Activated T-helper 1 cell treated with anti-CD3 and anti-CD28 coated beads, Interleukin-12 subunit alpha, Interleukin-12 subunit beta, Interleukin-2, Interleukin-4 antibody, amounts not matched to agents 30 ng/mL and 10 ng/mL and 1 ng/mL, durations not matched to agents 14 hours and 24 hours and 36 hours (primary cell): ENCODE measurements at regions of chr1 and their contacts with region 1.

Region 1: DNA sequence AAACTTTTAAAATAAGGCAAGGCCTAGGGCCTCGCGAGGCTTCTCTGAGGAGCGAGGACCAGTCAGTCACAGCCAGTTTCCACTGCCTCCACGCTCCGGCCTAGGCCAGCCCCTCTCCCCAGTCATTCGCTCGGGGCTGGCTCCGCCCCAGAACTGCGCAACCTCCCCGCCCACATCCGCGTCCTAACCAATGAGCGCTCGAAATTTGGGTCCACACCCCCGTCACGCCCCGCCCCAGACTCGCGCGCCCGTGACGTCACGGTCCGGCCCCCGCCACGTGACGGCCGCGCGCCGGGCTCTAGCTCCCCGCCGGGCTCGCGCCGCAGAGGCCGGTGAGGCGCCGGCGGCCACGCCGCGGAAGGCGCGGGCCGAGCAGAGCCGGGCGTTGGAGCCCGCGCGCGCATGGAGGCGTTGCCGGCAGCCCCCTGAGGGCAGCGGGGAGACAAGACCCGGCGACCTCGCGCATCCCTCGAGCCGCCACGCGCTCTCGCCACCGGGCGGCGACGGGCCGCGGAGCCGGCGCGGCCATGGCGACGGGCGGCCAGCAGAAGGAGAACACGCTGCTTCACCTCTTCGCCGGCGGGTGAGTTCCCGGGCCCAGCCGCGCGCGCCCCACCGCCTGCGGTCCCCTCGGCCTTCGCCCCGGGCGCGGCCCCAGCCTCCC is at the start of gene SLC25A33:
- DNase-seq: peak; percentile 98
- H3K4me3 Mint-ChIP-seq: peak within 1 kb of the TSS; percentile 94
- H3K27ac Mint-ChIP-seq: peak within 1 kb of the TSS; percentile 88
- H3K4me1 Mint-ChIP-seq: peaks cover 37% of the 10 kb centered on the region
- H3K27me3 Mint-ChIP-seq: no peaks in the 10 kb centered on the region
- total RNA-seq, gene SLC25A33: 12.5 and 13.5 TPM in 2 replicates

Region 2: DNA sequence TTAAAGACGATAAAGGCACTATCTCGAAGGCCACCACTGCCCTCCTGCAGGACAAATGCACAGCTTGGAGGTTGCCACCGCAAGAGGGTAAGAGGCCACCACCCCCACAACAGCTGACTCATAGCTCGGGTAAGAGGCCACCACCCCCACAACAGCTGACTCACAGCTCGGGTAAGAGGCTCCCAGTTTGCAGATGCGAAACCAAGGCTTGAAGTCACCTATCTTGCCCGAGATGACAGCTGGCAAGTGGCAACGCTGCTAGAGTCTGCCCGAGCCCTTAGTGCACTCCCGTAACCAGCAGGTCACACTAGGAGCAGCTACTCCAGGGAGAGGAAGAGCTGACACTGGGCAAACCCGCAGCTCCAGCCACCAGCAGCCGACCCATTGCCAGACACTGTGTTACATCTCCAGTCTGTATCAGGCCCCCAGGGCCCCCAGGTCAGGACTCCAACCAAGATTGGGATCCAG is 263.7 kb before region 1 on chr1:
- intact Hi-C with region 1: loop called (anchors 5 kb)
- DNase-seq: peak; percentile 58
- H3K4me3 Mint-ChIP-seq: peak overlapping the region; percentile 45
- H3K27ac Mint-ChIP-seq: peak overlapping the region; percentile 65
- H3K4me1 Mint-ChIP-seq: peaks cover 39% of the 10 kb centered on the region
- H3K27me3 Mint-ChIP-seq: peaks cover 2% of the 10 kb centered on the region

Region 3: GRCh38 chr1:9588551-9589143 is 49.4 kb after region 1 on chr1 and contains the start of gene TMEM201:
- intact Hi-C with region 1: loop called (anchors 1 kb)
- DNase-seq: peak; percentile 94
- H3K4me3 Mint-ChIP-seq: peak within 1 kb of the TSS; percentile 72
- H3K27ac Mint-ChIP-seq: peak within 1 kb of the TSS; percentile 48
- H3K4me1 Mint-ChIP-seq: peaks cover 30% of the 10 kb centered on the region
- H3K27me3 Mint-ChIP-seq: no peaks in the 10 kb centered on the region
- total RNA-seq, gene TMEM201: 36.7 and 38.7 TPM in 2 replicates

Region 4: DNA sequence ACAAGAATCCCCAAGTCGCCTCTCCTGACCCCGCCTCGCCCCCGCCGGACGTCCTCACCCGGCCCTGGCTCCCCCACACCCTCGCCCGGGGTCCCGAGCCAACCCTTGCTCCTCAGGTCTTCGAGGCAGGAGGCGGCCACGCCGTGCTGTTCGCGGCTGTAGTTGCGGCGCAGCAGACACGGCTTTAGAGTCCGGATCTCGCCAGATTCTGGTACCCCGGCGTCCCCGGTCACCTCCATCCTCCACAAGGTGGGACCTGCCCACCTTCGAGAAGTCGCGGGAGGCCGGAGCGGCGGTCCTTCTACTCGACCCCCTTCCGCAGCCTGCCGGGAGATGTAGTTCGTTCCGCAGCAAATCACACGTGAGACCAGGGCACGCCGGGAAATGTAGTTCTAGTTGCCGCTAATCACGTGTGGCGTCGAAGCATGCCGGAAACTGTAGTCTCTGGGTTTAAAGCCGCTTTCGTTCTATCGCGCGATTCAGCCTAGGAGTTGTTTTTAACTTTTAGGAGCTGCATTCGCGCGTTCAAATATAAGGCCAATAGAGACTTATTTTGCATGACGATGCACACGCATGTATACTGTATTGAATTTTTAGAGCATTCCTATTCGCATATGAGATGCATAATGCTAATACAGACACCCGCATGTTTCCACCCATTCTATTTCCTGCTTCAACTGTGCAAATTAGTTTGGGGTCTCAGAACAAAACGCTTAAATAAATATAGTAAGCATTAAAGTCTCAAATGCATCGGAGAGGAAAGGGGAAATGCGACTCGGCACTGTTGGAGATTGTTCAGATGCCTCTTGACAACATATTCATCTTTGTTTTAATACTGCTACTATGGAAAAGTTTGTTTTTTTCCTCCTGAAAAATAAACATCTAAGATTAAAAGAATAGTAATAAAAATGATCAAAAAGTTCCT is 933.2 kb after region 1 on chr1 and contains the start of gene DFFA:
- intact Hi-C with region 1: loop called (anchors 2 kb)
- DNase-seq: peak; percentile 90
- H3K4me3 Mint-ChIP-seq: peak within 1 kb of the TSS; percentile 89
- H3K27ac Mint-ChIP-seq: peak within 1 kb of the TSS; percentile 85
- H3K4me1 Mint-ChIP-seq: peaks cover 45% of the 10 kb centered on the region
- H3K27me3 Mint-ChIP-seq: no peaks in the 10 kb centered on the region
- total RNA-seq, gene DFFA: 54.7 and 60.1 TPM in 2 replicates